Calu3 (cell line): ENCODE measurements at regions of chr10 and their contacts with region 1.

Region 1: GRCh38 chr10:90885176-90885575 is 13.4 kb downstream of the RPP30 start:
- DNase-seq: no peak
- H3K4me3 Mint-ChIP-seq: no peak overlapping the region
- H3K27ac Mint-ChIP-seq: no peak overlapping the region
- H3K4me1 Mint-ChIP-seq: no peaks in the 10 kb centered on the region
- H3K27me3 Mint-ChIP-seq: no peaks in the 10 kb centered on the region
- CTCF ChIP-seq: no peak

Region 2: GRCh38 chr10:90917238-90917967 is 32.2 kb after region 1 on chr10:
- CTCF ChIA-PET with region 1: no interaction called
- intact Hi-C with region 1: no loop called
- DNase-seq: no peak
- H3K4me3 Mint-ChIP-seq: no peak overlapping the region
- H3K27ac Mint-ChIP-seq: no peak overlapping the region
- H3K4me1 Mint-ChIP-seq: peaks cover 10% of the 10 kb centered on the region
- H3K27me3 Mint-ChIP-seq: no peaks in the 10 kb centered on the region
- CTCF ChIP-seq: no peak

Region 3: DNA sequence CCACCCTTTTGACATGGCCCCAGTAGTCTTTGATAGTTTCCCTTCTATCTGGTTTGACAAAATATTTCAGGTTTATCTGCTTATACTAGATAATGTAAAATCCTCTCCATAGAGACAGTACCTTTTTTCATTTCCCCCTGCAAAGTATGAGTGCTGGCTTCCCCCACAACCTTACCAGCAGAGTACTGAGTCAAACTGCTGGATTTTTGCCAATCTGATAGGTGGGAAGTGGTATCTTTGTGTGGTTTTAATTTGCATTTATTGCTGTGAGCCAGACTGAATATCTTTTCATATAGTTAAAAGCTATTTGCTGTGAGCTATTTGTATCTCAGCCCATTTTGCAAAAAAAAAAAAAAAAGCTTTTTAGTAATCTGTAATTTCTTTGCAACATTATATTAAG is 492.9 kb after region 1 on chr10:
- CTCF ChIA-PET with region 1: no interaction called
- intact Hi-C with region 1: loop called (anchors 10 kb)
- DNase-seq: no peak
- H3K4me3 Mint-ChIP-seq: no peak overlapping the region
- H3K27ac Mint-ChIP-seq: no peak overlapping the region
- H3K4me1 Mint-ChIP-seq: peaks cover 17% of the 10 kb centered on the region
- H3K27me3 Mint-ChIP-seq: peaks cover 28% of the 10 kb centered on the region
- CTCF ChIP-seq: no peak